ENCODE measurements at regions of chr3 and their contacts with region 1.

Region 1: DNA sequence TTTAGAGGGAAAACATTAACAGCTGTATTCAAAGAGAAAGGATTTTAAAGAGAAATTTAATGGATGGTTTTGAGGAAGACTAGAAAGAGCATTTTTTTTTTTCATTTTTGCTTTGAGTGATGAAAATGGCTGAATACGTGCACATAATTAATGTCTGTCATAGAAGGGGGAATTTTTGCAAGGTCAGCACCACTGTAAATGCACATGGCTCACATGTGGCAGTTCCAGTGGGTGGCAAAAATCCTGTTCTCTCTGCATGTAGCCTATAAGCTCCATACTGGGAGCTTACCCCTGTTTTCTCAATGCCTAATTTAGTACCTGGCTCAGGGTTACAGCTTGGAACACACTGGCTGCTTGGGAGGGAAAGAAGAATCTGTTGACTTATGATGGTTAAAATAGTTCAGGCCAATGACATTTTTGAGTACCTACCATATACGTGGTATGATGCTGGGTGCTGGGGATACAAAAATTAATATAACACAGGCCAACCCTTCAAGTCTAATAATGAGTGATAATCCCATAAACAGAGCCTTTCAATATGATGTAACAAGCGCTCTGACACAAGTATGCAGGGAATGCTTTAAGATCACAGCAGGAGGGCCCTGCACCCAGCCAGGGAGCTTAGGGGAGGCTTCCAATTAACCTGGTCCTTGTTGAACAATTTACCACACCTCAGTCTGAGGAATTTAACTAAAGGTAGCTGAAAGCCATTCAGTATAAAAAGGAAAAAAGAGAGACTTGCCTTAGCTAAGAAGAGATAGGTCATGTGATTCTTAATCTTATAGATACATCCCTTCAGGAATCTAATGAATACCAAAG is 33.0 kb downstream of the HSPBAP1 start:
- DNase-seq: no peak
- ATAC-seq: no peak
- H3K4me3 ChIP-seq: no peak overlapping the region
- H3K27ac ChIP-seq: peak overlapping the region in 1 of 10 donors; percentile 59
- H3K4me1 ChIP-seq: peaks cover 0 to 41% (median 9%) of the 10 kb centered on the region in 9 donors
- H3K27me3 ChIP-seq: no peaks in the 10 kb centered on the region
- CTCF ChIP-seq: no peak

Region 2: GRCh38 chr3:122392868-122393844 is 367.5 kb before region 1 on chr3:
- intact Hi-C with region 1: loop called in 1 of 10 experiments (anchors 10 kb)
- DNase-seq: no peak
- ATAC-seq: no peak
- H3K4me3 ChIP-seq: no peak overlapping the region
- H3K27ac ChIP-seq: peak overlapping the region in 2 of 10 donors; percentile 5 to 33
- H3K4me1 ChIP-seq: peaks cover 0 to 49% (median 15%) of the 10 kb centered on the region in 9 donors
- H3K27me3 ChIP-seq: no peaks in the 10 kb centered on the region
- CTCF ChIP-seq: peak; percentile 51 to 86 (median 71)

Region 3: GRCh38 chr3:122576174-122576940 is 184.3 kb before region 1 on chr3:
- intact Hi-C with region 1: no loop called
- DNase-seq: no peak
- ATAC-seq: no peak
- H3K4me3 ChIP-seq: no peak overlapping the region
- H3K27ac ChIP-seq: peak overlapping the region in 1 of 10 donors; percentile 86
- H3K4me1 ChIP-seq: peaks cover 0 to 37% (median 10%) of the 10 kb centered on the region in 9 donors
- H3K27me3 ChIP-seq: no peaks in the 10 kb centered on the region
- CTCF ChIP-seq: no peak